GM10248 (cell line): ENCODE measurements at regions of chr2 and their contacts with region 1.

Region 1: DNA sequence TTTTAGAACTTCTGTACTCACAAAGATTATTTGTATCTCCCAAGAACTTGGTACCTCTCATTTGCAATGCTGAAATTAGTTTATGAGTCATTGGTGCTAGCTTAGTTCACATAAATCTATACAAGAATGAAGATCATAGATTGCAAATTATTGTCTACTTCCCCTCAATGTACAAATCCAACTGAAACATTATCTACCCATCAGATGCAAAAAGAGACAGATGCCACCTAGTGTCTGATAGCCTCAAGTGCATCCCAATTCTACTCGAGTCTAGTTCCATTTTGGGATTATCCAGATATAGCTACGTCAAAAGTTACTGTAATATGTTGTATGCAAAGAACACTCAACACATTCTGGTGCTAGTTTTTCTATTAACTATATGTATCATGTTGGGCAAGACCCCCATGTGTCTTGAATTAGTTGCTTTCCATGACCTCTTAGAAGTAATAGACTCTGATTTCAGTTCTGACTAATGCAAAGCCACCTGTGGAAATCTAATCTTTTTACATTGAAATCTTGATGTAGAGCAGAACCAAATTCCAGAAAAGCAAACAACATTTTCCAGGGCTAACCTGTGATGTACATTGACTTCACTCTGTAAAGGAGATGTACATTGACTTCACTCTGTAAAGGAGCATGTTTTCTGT is 210.0 kb downstream of the RBM43 start:
- DNase-seq: peak; percentile 29
- CTCF ChIP-seq: peak; percentile 64

Region 2: DNA sequence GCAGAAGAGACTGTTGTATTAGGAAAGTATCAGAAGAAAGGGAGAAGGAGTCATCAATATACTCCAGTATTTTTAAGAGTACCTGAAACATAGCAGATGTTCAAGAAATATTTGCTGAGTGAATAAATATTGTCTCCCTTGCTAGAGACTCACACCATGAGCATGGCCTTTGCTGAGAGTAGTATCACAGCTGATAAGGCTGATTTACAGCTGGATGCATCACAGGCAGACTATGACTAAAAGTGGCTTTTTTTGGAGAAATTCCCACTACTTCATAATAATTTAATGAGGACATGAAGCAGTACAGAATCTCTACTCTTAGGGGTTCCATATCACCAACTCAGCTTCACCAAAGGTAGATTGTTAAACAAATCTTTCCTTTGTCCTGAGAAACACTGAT is 163.4 kb before region 1 on chr2:
- CTCF ChIA-PET with region 1: no interaction called
- POLR2A ChIA-PET with region 1: no interaction called
- DNase-seq: no peak
- CTCF ChIP-seq: no peak

Region 3: GRCh38 chr2:151030663-151031230 is 20.9 kb before region 1 on chr2:
- CTCF ChIA-PET with region 1: interaction called, 10 read pairs
- POLR2A ChIA-PET with region 1: no interaction called
- DNase-seq: no peak
- CTCF ChIP-seq: no peak

Region 4: DNA sequence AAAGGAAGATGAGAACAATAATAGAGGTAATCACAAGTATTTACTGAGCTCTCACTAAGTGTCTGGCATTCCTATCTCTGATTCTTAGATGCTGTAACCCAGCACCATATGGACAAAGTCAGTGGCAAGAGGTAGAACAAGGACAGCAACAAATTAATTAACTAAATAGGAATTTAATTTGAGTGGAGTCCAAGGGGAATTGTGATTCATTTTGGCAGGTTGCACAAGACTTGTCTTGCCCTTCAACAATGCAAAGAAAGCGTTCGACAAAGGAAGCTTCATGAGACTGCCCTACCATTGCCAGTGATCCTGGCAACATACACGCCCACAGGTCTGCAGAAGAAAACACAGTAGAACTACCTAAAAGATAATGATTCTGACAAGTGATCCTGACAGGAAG is 11.7 kb before region 1 on chr2:
- CTCF ChIA-PET with region 1: interaction called, 28 read pairs
- POLR2A ChIA-PET with region 1: no interaction called
- DNase-seq: no peak
- CTCF ChIP-seq: no peak